ENCODE measurements at regions of chr3 and their contacts with region 1.

Region 1: GRCh38 chr3:13414040-13414729 is 5.9 kb downstream of the NUP210 start:
- DNase-seq: peak; percentile 62 to 86 (median 76)
- H3K4me3 ChIP-seq: peak overlapping the region; percentile 55
- H3K4me3 Mint-ChIP-seq: peak overlapping the region; percentile 76 to 94 (median 85)
- H3K27ac ChIP-seq: peak overlapping the region; percentile 60
- H3K27ac Mint-ChIP-seq: peak overlapping the region; percentile 85 to 99 (median 97)
- H3K4me1 ChIP-seq: peaks cover 67% of the 10 kb centered on the region
- H3K4me1 Mint-ChIP-seq: peaks cover 56 to 71% (median 70%) of the 10 kb centered on the region in 3 donors
- H3K27me3 ChIP-seq: no peaks in the 10 kb centered on the region
- H3K27me3 Mint-ChIP-seq: peaks cover 0 to 4% of the 10 kb centered on the region in 2 donors

Region 2: DNA sequence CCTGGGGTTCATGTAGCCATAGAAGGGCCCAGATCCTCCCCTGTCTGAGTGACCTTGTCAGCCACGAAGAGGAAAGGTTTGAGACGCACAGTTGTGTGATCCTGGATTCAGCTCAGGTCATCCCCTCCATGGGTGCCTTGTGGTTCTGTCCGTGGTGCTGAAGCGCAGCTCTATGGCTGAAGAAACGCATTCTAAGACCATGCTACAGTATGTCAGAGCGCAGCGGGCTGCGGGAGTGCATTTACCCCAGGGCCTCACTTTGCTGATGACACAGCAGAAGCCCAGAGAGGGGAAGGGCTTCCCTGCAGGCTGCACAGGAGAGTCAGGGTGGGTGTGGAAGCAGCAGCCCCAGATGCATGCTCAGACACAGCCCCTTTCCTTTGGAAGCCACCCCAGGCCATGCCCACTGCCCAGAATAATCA is 272.2 kb before region 1 on chr3:
- CTCF ChIA-PET with region 1: no interaction called
- POLR2A ChIA-PET with region 1: no interaction called
- DNase-seq: no peak
- H3K4me3 ChIP-seq: no peak overlapping the region
- H3K4me3 Mint-ChIP-seq: peak overlapping the region in 1 of 7 donors; percentile 23
- H3K27ac ChIP-seq: no peak overlapping the region
- H3K27ac Mint-ChIP-seq: no peak overlapping the region
- H3K4me1 ChIP-seq: no peaks in the 10 kb centered on the region
- H3K4me1 Mint-ChIP-seq: no peaks in the 10 kb centered on the region
- H3K27me3 ChIP-seq: no peaks in the 10 kb centered on the region
- H3K27me3 Mint-ChIP-seq: peaks cover 18 to 44% of the 10 kb centered on the region in 2 donors

Region 3: GRCh38 chr3:13338231-13338630 is 76.0 kb before region 1 on chr3:
- CTCF ChIA-PET with region 1: no interaction called
- POLR2A ChIA-PET with region 1: no interaction called
- DNase-seq: no peak
- H3K4me3 ChIP-seq: no peak overlapping the region
- H3K4me3 Mint-ChIP-seq: no peak overlapping the region
- H3K27ac ChIP-seq: no peak overlapping the region
- H3K27ac Mint-ChIP-seq: peak overlapping the region in 6 of 8 donors; percentile 32 to 73 (median 49)
- H3K4me1 ChIP-seq: peaks cover 5% of the 10 kb centered on the region
- H3K4me1 Mint-ChIP-seq: peaks cover 4 to 16% (median 13%) of the 10 kb centered on the region in 3 donors
- H3K27me3 ChIP-seq: no peaks in the 10 kb centered on the region
- H3K27me3 Mint-ChIP-seq: no peaks in the 10 kb centered on the region

Region 4: GRCh38 chr3:13427662-13428603 is 13.7 kb after region 1 on chr3:
- CTCF ChIA-PET with region 1: interaction called, 31 read pairs
- POLR2A ChIA-PET with region 1: interaction called, 4 read pairs
- DNase-seq: peak in 2 of 5 donors; percentile 37 to 60
- H3K4me3 ChIP-seq: no peak overlapping the region
- H3K4me3 Mint-ChIP-seq: peak overlapping the region; percentile 25 to 71 (median 49)
- H3K27ac ChIP-seq: no peak overlapping the region
- H3K27ac Mint-ChIP-seq: peak overlapping the region; percentile 43 to 94 (median 86)
- H3K4me1 ChIP-seq: peaks cover 36% of the 10 kb centered on the region
- H3K4me1 Mint-ChIP-seq: peaks cover 14 to 35% (median 26%) of the 10 kb centered on the region in 3 donors
- H3K27me3 ChIP-seq: no peaks in the 10 kb centered on the region
- H3K27me3 Mint-ChIP-seq: no peaks in the 10 kb centered on the region

Measured in CD8-positive, alpha-beta memory T cell (primary cell).